ENCODE measurements at regions of chr1 and their contacts with region 1.

Region 1: DNA sequence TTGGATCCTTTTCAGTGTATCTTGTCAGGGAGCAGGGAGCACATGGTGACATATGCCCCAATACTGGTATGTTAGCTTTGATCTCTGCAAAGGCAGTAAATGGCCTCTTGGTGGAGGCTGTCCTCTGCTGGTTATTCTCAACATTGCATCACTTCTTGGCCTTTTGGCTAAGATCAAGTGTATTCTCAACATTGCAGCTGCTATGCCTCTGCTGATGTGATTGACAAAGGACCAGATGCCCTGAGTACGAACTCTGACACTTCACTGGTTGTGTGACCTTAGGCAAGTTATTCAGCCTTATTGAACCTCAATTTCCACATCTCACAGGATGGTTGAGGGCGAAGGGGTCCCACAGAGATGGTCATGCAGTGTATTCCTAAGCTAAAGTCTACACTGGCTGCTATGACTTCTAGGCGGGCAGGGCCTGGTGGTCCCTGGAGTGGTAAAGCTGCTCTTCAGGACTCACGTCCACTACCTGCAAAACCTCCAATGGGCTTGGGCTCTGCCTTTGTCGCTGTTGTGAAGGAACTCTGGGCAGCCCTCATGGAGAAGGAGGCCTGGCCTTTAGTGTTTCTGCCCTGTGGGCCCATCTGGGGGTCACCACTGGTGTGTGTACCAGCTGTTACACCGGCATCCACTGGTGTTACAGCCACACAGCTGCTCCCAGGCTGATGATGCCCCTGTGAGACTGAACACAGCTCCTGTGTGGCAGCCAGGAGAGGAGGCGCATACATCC is 64.8 kb downstream of the DNTTIP2 start:
- DNase-seq: peak; percentile 95
- ATAC-seq: peak; percentile 70
- H3K4me3 ChIP-seq: no peak overlapping the region
- H3K27ac ChIP-seq: peak overlapping the region; percentile 94
- H3K4me1 ChIP-seq: peaks cover 71% of the 10 kb centered on the region
- H3K27me3 ChIP-seq: no peaks in the 10 kb centered on the region
- CTCF ChIP-seq: peak; percentile 98

Region 2: DNA sequence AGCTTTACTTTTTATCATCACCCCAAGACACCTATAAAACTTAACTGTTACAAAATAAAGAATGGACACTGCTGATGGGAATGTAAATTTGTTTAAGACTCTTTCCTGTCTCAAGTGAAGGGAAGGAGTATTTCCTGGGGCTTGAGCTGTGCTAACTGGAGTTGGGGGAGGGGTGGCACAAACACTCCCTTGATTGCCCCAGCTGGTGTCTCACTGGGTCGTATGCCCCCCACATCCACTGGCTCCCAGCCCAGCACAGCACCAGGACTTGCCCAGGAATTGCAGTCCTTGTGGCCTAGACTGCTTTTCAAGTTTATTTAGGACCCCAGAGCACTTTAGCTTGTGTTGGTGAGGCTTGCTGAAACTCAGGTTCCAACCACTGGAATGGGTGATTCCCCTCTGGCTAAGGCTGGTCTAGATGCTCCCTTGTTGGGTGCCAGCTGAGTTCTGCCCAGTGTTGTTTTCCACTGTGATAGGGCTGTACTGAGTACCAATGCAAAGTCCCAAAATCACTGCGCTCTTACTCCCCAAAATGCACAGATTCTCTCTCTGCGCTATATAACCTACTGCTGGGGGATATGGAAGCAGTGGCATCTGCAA is 517.6 kb before region 1 on chr1:
- CTCF ChIA-PET with region 1: no interaction called
- POLR2A ChIA-PET with region 1: no interaction called
- intact Hi-C with region 1: no loop called
- DNase-seq: no peak
- ATAC-seq: no peak
- H3K4me3 ChIP-seq: no peak overlapping the region
- H3K27ac ChIP-seq: no peak overlapping the region
- H3K4me1 ChIP-seq: no peaks in the 10 kb centered on the region
- H3K27me3 ChIP-seq: no peaks in the 10 kb centered on the region
- CTCF ChIP-seq: no peak

Region 3: GRCh38 chr1:93528412-93528811 is 285.8 kb before region 1 on chr1:
- CTCF ChIA-PET with region 1: no interaction called
- POLR2A ChIA-PET with region 1: no interaction called
- intact Hi-C with region 1: no loop called
- DNase-seq: no peak
- ATAC-seq: no peak
- H3K4me3 ChIP-seq: no peak overlapping the region
- H3K27ac ChIP-seq: no peak overlapping the region
- H3K4me1 ChIP-seq: no peaks in the 10 kb centered on the region
- H3K27me3 ChIP-seq: no peaks in the 10 kb centered on the region
- CTCF ChIP-seq: no peak

Region 4: GRCh38 chr1:93615582-93616150 is 198.6 kb before region 1 on chr1:
- CTCF ChIA-PET with region 1: interaction called, 12 read pairs
- POLR2A ChIA-PET with region 1: no interaction called
- intact Hi-C with region 1: no loop called
- DNase-seq: peak; percentile 47
- ATAC-seq: peak; percentile 18; the same call in 1 of the 2 replicates
- H3K4me3 ChIP-seq: no peak overlapping the region
- H3K27ac ChIP-seq: peak overlapping the region; percentile 52
- H3K4me1 ChIP-seq: peaks cover 65% of the 10 kb centered on the region
- H3K27me3 ChIP-seq: no peaks in the 10 kb centered on the region
- CTCF ChIP-seq: no peak

Region 5: GRCh38 chr1:93638981-93639380 is 175.2 kb before region 1 on chr1:
- CTCF ChIA-PET with region 1: interaction called, 13 read pairs
- POLR2A ChIA-PET with region 1: no interaction called
- intact Hi-C with region 1: no loop called
- DNase-seq: no peak
- ATAC-seq: peak; percentile 9; the same call in 1 of the 2 replicates
- H3K4me3 ChIP-seq: no peak overlapping the region
- H3K27ac ChIP-seq: no peak overlapping the region
- H3K4me1 ChIP-seq: peaks cover 3% of the 10 kb centered on the region; the same call in 1 of the 2 replicates
- H3K27me3 ChIP-seq: no peaks in the 10 kb centered on the region
- CTCF ChIP-seq: no peak

Region 6: DNA sequence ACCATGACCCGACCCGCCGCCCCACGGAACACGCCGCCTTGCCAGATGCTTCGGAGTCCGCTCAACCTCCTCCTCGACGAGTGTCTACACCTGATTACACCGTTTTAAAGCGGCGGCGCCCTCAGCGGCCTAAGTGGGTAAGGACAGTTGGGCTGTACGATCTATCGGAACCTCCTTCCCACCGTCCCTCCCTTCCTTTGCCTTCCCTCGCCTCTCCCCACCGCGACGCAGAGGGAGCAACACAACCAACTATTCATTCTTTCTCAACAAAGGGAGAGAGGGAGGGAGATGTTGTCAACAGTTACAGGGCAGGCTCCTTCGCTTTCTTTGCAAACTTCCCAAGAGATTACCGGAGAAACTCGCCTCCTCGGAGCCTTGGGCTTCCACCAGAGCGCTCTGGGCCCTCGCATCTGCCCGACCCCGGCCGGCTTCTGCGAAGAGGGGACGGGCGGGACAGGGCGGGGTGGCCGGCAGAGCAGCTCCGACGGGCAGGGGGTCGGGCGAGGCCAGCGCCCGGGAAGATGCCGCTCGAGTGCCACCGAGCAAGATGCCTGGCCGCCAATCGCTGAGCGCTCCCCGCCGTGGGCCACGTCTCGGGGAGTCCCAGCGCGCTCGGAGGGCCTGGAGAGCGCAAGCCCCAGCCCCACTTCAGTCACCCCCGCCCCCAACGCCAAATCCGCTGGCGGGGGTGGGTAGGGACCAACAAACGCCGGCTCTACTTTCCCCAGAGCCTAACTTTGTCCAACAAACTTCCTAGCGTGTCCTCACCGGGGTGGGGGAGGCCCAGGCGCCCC is 133.3 kb before region 1 on chr1:
- CTCF ChIA-PET with region 1: interaction called, 4 read pairs
- POLR2A ChIA-PET with region 1: no interaction called
- intact Hi-C with region 1: loop called (anchors 1 kb)
- DNase-seq: peak; percentile 82
- ATAC-seq: peak; percentile 34
- H3K4me3 ChIP-seq: peak overlapping the region; percentile 95
- H3K27ac ChIP-seq: peak overlapping the region; percentile 99
- H3K4me1 ChIP-seq: peaks cover 78% of the 10 kb centered on the region
- H3K27me3 ChIP-seq: no peaks in the 10 kb centered on the region
- CTCF ChIP-seq: peak; percentile 61

Region 7: DNA sequence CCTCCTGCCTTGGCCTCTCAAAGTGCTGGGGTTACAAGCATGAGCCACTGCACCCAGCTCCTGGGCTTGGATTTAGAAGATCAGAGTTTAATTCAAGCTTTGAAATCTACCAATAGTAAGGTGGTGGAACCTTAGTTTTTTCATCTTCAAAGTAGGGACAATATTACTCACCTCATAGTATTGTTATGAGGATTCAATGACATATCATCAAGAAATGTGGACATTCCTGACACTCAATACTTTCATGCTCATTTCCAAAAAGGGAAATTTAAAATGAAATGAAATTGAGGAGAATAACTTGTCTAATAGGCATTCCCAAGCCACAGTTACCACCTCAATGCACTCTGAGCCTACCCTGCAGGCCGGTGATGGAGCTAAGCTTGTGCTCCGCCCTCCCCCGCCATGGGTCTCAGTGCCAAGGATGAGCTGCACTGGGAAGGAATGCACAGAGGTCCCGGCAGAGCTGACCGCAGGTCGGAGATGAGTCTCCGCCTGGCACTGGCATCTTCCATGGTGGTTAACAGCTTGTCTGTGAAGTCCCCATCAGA is 76.1 kb before region 1 on chr1:
- CTCF ChIA-PET with region 1: interaction called, 13 read pairs
- POLR2A ChIA-PET with region 1: interaction called, 5 read pairs
- intact Hi-C with region 1: loop called (anchors 2 kb)
- DNase-seq: peak; percentile 98
- ATAC-seq: peak; percentile 92
- H3K4me3 ChIP-seq: no peak overlapping the region
- H3K27ac ChIP-seq: peak overlapping the region; percentile 97
- H3K4me1 ChIP-seq: peaks cover 49% of the 10 kb centered on the region
- H3K27me3 ChIP-seq: no peaks in the 10 kb centered on the region
- CTCF ChIP-seq: no peak

Region 8: DNA sequence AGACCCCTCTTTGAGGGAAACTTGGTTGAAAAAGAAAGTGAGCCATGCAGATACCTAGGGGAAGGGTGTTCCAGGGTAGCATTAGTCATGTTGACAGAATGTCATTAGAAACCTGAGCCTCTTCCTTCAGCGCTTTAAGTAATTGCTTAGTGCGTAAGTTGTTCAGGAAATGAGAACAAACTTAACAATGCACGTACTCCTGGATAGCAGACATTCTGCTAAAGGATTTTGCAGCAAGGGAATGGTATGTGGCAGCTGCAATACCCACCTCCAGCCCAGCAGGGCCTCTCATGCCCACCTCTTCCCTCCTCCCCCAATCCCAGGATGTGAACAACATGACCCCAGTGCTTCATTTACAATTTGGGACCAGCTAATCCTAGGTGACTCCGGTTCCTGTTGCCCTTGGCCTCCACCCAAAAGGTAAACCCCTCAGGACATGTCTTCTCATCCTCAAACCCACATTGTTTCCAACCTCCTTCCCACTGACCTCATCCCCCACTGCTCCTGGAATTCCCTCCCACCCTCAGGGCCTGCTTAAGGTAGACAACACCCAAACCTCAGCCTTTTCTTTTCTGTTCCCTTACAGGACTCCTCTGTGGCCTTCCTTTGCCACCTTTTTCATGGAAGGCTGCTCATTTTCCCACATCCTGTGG is 34.6 kb before region 1 on chr1:
- CTCF ChIA-PET with region 1: interaction called, 3 read pairs
- POLR2A ChIA-PET with region 1: no interaction called
- intact Hi-C with region 1: loop called (anchors 1 kb)
- DNase-seq: peak; percentile 99
- ATAC-seq: peak; percentile 85
- H3K4me3 ChIP-seq: no peak overlapping the region; the same call in 1 of the 2 replicates
- H3K27ac ChIP-seq: peak overlapping the region; percentile 98
- H3K4me1 ChIP-seq: peaks cover 48% of the 10 kb centered on the region
- H3K27me3 ChIP-seq: no peaks in the 10 kb centered on the region
- CTCF ChIP-seq: no peak

Region 9: DNA sequence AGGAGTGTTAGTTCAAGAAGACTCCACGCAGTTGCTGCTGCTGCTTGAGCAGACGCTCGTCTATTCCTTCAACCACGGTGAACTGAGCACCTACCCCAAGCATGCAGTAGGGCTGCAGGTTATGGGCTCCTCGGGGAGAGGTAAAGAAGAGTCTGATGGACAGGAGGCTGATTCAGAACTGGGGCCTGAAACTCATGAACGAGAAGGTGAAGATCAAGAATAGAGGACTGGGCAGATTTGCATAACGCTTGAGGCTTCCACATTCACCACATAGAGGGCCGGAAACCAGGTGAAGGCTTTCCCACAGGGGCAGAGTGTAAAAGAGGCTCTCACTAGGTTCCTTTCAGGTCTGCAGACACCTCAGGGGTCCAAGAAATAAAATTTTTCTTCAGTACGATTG is 297.7 kb after region 1 on chr1:
- CTCF ChIA-PET with region 1: no interaction called
- POLR2A ChIA-PET with region 1: no interaction called
- intact Hi-C with region 1: no loop called
- DNase-seq: no peak
- ATAC-seq: no peak
- H3K4me3 ChIP-seq: no peak overlapping the region
- H3K27ac ChIP-seq: no peak overlapping the region
- H3K4me1 ChIP-seq: no peaks in the 10 kb centered on the region
- H3K27me3 ChIP-seq: no peaks in the 10 kb centered on the region
- CTCF ChIP-seq: no peak